Activated CD8-positive, alpha-beta memory T cell treated with anti-CD3 and anti-CD28 coated beads, Interleukin-2, amount 10 ng/mL, durations not matched to agents 7 days and 5 days (primary cell): ENCODE measurements at regions of chr2 and their contacts with region 1.

Region 1: GRCh38 chr2:230781130-230781797 is 68.6 kb downstream of the CAB39 start:
- DNase-seq: peak; percentile 88
- ATAC-seq: peak; percentile 93
- H3K4me3 Mint-ChIP-seq: peak overlapping the region; percentile 27
- H3K27ac Mint-ChIP-seq: peak overlapping the region; percentile 81
- H3K4me1 Mint-ChIP-seq: peaks cover 81% of the 10 kb centered on the region
- H3K27me3 Mint-ChIP-seq: no peaks in the 10 kb centered on the region

Region 2: DNA sequence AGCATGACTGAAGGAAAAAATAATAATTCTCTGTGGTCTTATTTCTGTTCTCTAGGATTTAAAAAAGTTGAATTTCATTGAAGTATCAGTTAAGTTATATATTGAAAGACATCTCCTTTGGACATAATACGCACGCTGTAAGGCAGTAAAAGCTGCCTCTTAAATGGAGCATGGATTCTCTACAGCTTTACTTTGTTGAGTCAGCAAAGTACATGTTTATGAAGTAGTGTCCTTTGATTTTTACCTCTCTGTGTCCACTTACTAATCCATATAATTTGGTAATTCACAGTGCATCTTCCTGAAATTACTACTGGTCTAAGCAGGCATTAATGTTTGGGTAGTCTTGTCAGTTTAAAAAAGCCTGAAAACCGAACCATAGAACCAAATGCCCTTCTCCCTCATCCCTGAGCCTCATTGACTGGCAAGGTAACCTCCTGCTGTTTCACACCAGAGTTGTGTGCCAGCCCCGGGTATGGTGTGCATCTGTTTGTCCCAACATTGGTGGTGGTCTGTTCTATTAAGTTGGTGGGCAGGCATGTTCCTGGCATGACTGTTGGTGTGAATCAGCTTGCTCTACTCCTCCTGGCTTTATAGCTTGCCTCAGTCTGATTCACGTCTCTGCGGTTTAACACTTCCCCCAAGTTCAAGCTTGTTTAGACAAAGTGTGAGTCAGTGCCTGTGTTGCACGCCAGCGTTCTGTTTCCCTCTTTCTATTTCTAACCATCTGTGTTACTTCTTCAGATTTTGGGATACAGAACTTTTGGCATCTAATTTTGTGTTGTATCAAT is 12.5 kb after region 1 on chr2:
- CTCF ChIA-PET with region 1: interaction called, 23 read pairs
- DNase-seq: peak; percentile 92
- ATAC-seq: peak; percentile 95
- H3K4me3 Mint-ChIP-seq: peak overlapping the region; percentile 75
- H3K27ac Mint-ChIP-seq: peak overlapping the region; percentile 96
- H3K4me1 Mint-ChIP-seq: peaks cover 51% of the 10 kb centered on the region
- H3K27me3 Mint-ChIP-seq: no peaks in the 10 kb centered on the region

Region 3: DNA sequence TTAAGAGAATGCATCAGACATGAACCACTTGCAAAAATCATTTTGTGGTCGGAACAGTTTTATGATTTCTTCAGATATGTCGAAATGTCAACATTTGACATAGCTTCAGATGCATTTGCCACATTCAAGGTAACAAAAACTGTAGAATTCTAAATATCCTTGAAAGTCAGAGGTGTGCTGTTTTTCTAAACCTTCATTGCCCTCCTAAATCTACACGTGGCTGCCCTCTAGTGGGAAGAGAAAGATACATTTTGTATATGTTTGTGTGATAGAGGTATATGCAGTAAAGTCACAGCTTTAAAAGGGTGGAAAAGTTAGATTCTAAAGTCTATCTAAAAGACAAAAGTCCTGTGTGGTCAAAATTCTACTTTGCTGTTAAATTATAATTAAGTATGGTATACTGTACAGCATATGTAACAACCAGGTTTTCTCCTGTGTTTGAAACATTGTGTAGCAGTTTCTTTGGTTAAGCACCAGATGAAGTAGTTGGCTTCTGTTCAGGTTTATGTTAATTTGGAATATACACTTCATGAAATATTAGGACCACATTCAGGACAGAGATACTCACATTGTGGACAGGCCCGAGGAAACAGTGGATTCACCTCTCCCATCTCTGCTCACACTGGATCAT is 17.6 kb after region 1 on chr2:
- CTCF ChIA-PET with region 1: interaction called, 23 read pairs
- DNase-seq: peak; percentile 65
- ATAC-seq: no peak
- H3K4me3 Mint-ChIP-seq: no peak overlapping the region
- H3K27ac Mint-ChIP-seq: no peak overlapping the region
- H3K4me1 Mint-ChIP-seq: peaks cover 35% of the 10 kb centered on the region
- H3K27me3 Mint-ChIP-seq: no peaks in the 10 kb centered on the region